Activated CD4-positive, alpha-beta T cell treated with anti-CD3 and anti-CD28 coated beads for 36 hours (primary cell): ENCODE measurements at regions of chr12 and their contacts with region 1.

Region 1: DNA sequence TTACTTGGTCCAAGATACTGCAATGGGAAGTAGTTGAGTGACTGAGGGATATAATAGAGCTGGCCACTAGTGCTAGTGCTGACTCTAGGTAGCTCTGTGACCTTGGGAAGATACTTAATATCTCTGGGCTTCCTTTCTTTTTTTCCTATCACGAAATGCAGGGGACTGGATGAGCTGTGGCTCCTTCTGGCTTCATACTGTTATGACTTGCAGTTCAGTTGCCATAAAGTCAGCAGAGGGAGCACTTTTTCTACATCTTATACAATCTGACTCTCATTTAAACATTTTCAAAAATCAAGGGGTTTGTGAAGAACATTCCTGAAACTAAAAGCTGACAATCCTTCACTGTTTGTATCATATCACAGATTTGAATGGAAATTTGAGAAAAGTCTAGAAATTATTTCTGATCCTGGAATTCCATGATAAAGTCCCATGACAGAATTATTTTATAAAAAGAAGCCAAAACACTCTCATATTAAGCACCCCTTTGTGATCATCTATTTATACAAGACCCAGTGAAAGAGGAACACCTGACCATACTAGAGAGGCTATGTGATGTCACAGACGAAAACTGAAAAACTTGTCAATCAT is 5.4 kb downstream of the BHLHE41 start:
- DNase-seq: no peak
- ATAC-seq: no peak
- H3K4me3 Mint-ChIP-seq: no peak overlapping the region
- H3K27ac Mint-ChIP-seq: no peak overlapping the region
- H3K4me1 Mint-ChIP-seq: peaks cover 23% of the 10 kb centered on the region
- H3K27me3 Mint-ChIP-seq: peaks cover 63% of the 10 kb centered on the region

Region 2: DNA sequence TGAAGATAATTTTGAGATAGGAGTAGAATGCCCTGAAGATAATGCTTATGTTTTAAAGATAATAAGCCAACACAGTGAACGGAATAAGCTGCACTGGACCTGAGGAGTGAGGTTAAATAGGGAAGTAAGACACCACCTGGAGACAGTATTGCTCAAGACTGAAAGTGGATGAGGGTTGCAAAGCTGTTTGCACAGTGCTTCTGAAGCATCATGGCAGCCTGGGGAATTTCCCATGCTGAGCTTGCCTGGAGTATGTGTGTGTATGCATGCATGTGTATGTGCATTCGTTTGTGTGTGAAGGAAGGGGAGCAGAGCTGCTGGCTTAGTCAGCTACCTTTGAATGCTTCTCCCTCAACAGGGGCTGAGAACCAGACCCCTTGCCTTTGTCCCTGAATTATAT is 30.5 kb before region 1 on chr12:
- CTCF ChIA-PET with region 1: no interaction called
- POLR2A ChIA-PET with region 1: no interaction called
- intact Hi-C with region 1: no loop called
- DNase-seq: peak; percentile 10
- ATAC-seq: no peak
- H3K4me3 Mint-ChIP-seq: no peak overlapping the region
- H3K27ac Mint-ChIP-seq: no peak overlapping the region
- H3K4me1 Mint-ChIP-seq: no peaks in the 10 kb centered on the region
- H3K27me3 Mint-ChIP-seq: no peaks in the 10 kb centered on the region

Region 3: GRCh38 chr12:26651566-26652188 is 532.2 kb after region 1 on chr12:
- CTCF ChIA-PET with region 1: interaction called, 4 read pairs
- POLR2A ChIA-PET with region 1: no interaction called
- intact Hi-C with region 1: loop called in 1 of 2 experiments (anchors 1 kb)
- DNase-seq: peak; percentile 59
- ATAC-seq: peak; percentile 55
- H3K4me3 Mint-ChIP-seq: no peak overlapping the region
- H3K27ac Mint-ChIP-seq: no peak overlapping the region
- H3K4me1 Mint-ChIP-seq: no peaks in the 10 kb centered on the region
- H3K27me3 Mint-ChIP-seq: no peaks in the 10 kb centered on the region